Lower leg skin (tissue), 4 donors: ENCODE measurements at regions of chr10 and their contacts with region 1.

Region 1: DNA sequence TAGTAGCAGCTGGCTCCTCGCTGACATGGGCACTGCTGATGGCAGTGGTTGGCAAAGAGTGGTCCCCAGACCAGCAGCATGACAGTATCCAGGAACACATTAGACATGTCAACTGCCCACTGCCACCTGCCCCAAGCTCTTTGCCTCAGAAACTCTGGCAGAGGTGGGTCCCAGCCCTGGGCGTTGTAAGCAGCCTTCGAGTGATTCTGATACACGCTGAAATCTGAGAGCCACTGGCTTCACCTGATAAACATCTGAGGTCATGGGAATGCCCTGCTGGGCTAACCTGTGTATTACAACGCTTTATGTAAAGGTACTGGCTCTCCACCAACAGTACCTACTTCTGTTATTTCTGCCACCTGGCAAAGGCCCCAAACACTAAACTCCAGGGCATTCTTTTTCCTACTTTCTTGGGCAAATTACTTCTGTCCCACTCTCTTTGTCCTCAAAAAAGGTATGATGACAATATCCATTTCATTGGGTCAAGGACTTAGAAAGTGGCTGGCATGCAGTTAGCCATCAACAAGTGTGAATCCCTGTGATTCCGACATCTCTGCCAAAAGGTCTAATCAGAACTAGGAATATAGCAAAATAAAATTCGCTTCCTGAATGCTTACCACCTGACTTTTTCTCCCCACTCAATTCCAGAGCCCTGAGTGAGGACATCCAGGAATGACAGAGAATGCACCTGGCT is 9.2 kb downstream of the SGMS1 start:
- DNase-seq: no peak
- H3K4me3 ChIP-seq: no peak overlapping the region
- CTCF ChIP-seq: no peak
- POLR2A ChIP-seq: no peak

Region 2: GRCh38 chr10:49407552-49408137 is 1206.9 kb before region 1 on chr10:
- intact Hi-C with region 1: loop called (anchors 5 kb)
- DNase-seq: peak; percentile 68 to 94
- H3K4me3 ChIP-seq: no peak overlapping the region
- CTCF ChIP-seq: peak in 1 of 3 donors; percentile 24
- POLR2A ChIP-seq: no peak

Region 3: GRCh38 chr10:50395279-50395678 is 219.3 kb before region 1 on chr10:
- intact Hi-C with region 1: no loop called
- DNase-seq: peak in 1 of 2 donors; percentile 75
- H3K4me3 ChIP-seq: no peak overlapping the region
- CTCF ChIP-seq: no peak
- POLR2A ChIP-seq: no peak

Region 4: GRCh38 chr10:50527442-50528043 is 87.0 kb before region 1 on chr10:
- intact Hi-C with region 1: no loop called
- DNase-seq: no peak
- H3K4me3 ChIP-seq: no peak overlapping the region
- CTCF ChIP-seq: no peak
- POLR2A ChIP-seq: no peak

Region 5: DNA sequence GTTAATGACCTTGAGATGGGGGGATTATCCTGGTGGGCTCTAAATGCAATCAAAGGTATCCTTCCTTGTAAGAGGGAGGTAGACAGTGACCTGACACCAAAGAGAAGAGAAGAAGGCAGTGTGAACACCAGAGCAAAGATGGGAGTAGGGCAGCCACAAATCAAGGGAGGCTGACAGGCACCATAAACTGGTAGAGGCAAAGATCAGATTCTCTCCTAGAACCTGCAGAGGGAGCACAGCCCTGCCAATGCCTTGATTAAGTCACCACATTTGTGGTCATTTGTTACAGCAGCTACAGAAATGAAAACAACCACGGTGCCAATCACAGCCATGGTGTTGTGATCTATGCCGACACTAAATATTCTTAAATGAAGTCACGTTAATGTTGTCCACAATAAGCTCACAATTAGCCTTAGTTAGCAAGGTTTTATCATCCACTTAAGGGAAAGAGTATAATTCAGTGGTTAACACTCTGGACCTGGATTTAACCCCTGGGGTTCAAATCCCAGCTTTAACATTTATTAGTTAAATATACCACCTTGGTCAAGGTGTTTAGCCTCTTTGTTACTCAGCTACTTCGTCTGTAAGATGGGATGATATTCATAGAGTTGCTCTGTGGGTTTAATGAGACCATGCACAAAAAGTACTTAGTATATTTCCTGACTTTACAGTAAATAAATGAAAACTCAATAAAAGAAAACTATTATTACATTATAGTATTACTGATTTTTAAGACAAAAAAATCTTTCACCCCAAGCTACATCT is 61.6 kb before region 1 on chr10:
- intact Hi-C with region 1: loop called (anchors 10 kb)
- DNase-seq: no peak
- H3K4me3 ChIP-seq: no peak overlapping the region
- CTCF ChIP-seq: no peak
- POLR2A ChIP-seq: no peak

Region 6: DNA sequence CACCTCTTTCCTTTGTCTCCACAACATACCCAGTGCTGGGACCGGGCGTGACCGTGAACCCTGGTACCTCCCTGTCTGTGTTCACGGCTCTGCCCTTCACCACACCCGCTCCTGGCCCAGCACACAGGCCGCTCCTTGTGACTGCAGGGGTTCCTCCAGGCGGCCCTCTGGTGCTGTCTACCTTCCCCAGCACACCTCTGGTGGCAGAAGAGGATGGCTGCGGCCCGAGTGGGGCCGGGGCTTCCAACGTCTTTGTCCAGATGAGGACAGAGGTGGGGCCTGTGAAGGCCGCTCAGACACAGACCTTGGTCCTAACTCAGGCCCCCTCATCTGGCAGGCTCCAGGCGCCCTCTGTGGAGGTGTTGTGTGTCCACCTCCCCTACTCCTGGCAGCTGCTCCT is 64.6 kb after region 1 on chr10:
- intact Hi-C with region 1: no loop called
- DNase-seq: no peak
- H3K4me3 ChIP-seq: no peak overlapping the region
- CTCF ChIP-seq: no peak
- POLR2A ChIP-seq: no peak

Region 7: GRCh38 chr10:51047857-51048256 is 433.3 kb after region 1 on chr10:
- intact Hi-C with region 1: no loop called
- DNase-seq: no peak
- H3K4me3 ChIP-seq: no peak overlapping the region
- CTCF ChIP-seq: no peak
- POLR2A ChIP-seq: no peak